ENCODE measurements at regions of chr10 and their contacts with region 1.

Region 1: GRCh38 chr10:79602953-79603352 is 7.8 kb upstream of the SFTPA1 start:
- DNase-seq: no peak
- H3K4me3 ChIP-seq: no peak overlapping the region
- H3K27ac ChIP-seq: no peak overlapping the region
- H3K4me1 ChIP-seq: no peaks in the 10 kb centered on the region
- H3K27me3 ChIP-seq: no peaks in the 10 kb centered on the region
- CTCF ChIP-seq: no peak
- POLR2A ChIP-seq: no peak

Region 2: DNA sequence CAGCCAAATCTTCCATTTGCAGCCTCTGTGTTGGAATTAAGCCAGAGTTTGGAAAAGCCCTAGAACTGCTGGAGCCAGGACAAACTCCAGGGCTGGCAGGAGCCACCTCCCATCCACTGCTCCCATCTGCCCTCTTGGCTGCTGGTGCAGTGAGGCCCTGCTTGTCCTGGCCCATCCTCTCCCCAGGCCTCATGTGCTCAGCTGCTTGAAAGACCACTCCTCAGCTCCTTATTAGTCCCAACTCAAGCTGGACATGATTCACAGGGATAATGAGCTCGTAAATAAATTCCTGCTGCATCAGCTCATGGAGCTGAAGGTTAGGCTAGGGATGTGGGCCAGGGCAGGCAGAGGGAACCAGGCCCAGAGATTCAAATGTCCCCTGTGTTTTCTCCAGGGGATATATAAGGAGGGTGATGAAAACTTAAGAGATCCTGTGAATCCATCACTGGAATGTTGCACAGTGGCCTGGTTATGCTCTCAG is 1286.5 kb before region 1 on chr10:
- intact Hi-C with region 1: loop called (anchors 5 kb)
- DNase-seq: peak; percentile 64 to 87
- H3K4me3 ChIP-seq: no peak overlapping the region
- H3K27ac ChIP-seq: peak overlapping the region; percentile 50
- H3K4me1 ChIP-seq: peaks cover 29% of the 10 kb centered on the region
- H3K27me3 ChIP-seq: no peaks in the 10 kb centered on the region
- CTCF ChIP-seq: no peak
- POLR2A ChIP-seq: no peak

Region 3: DNA sequence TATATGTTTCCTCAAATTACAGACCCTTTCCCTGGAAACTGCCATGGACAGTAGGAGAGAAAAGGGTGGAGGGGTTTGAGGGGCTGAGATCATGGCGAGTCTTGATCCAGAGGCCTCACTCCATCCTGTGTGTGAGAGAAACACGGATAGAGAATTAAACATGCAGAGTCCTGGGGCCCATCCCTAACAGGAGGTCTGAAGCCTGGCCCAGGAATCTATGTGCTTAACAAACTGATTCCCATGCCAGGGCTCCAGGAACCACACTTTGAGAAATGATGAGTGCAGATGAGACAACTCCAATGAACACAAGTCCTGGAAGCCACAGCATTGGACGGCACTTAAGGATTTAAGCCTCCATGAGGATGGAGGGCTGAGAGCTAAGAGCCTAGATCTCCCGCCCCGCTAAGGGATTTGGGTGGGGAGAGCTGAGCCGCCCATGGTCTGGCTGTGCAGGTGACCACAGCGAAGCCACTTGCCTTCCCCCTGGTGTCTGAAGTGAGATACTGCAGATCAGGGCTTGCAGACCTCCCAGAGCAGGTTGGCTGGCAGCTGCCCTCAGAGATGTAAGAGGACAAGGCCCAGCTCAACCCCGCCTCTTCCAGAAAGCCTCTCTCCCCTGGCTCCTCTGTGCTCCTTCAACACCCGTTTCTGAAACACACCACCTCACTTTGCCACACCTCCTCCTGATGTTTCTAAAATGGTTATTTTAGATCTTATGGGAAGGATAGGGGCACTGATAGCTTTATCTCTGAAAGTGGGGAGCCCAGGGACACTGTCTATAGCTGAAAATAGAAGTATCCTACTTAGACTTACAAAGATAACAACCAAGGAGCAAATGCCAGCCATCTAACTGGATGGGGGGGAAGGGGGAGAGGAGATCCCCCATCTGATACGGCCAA is 115.4 kb before region 1 on chr10:
- intact Hi-C with region 1: no loop called
- DNase-seq: peak in 1 of 2 donors; percentile 77
- H3K4me3 ChIP-seq: no peak overlapping the region
- H3K27ac ChIP-seq: peak overlapping the region; percentile 75
- H3K4me1 ChIP-seq: peaks cover 44% of the 10 kb centered on the region
- H3K27me3 ChIP-seq: no peaks in the 10 kb centered on the region
- CTCF ChIP-seq: peak in 2 of 3 experiments; percentile 18 to 52
- POLR2A ChIP-seq: no peak

Region 4: GRCh38 chr10:80289451-80290287 is 686.7 kb after region 1 on chr10 and contains the start of gene MAT1A:
- intact Hi-C with region 1: no loop called
- DNase-seq: peak; percentile 79 to 95
- H3K4me3 ChIP-seq: no peak within 1 kb of the TSS
- H3K27ac ChIP-seq: no peak within 1 kb of the TSS
- H3K4me1 ChIP-seq: no peaks in the 10 kb centered on the region
- H3K27me3 ChIP-seq: no peaks in the 10 kb centered on the region
- CTCF ChIP-seq: no peak
- POLR2A ChIP-seq: no peak
- total RNA-seq, gene MAT1A: not detected

Measured in vagina (tissue), 2 donors.